ENCODE measurements at regions of chr6 and their contacts with region 1.

Region 1: GRCh38 chr6:166466178-166467122 is 83.7 kb upstream of the MPC1 start:
- DNase-seq: peak in 1 of 2 donors; percentile 75
- H3K4me3 ChIP-seq: peak overlapping the region in 1 of 2 donors; percentile 33
- H3K27ac ChIP-seq: peak overlapping the region; percentile 64 to 75
- H3K4me1 ChIP-seq: peaks cover 0 to 16% of the 10 kb centered on the region in 2 donors
- H3K27me3 ChIP-seq: no peaks in the 10 kb centered on the region
- CTCF ChIP-seq: no peak

Region 2: DNA sequence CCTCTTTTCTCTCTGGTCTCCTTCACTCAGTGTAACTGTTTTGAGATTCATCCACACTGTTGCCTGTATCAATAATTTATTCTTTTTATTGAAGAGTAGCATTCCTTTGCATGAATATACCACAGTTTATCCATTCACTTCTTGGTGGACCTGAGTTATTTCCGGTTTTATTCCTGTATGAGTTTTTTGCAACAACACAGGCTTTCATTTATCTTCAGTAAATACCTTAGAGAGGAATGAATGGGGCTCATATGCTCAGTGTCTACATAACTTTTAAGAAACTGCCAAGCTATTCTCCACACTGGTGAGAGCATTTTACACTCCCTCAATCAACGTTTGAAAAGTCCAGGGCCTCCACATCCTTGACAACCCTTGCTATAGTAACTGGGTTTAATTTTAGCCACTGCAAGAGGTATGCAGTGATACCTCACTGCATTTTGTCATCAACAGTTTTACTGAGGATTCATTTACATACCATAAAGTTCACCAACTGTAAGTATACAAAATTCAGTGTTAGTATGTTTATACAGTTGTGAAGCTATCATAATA is 958.1 kb before region 1 on chr6:
- intact Hi-C with region 1: no loop called
- DNase-seq: no peak
- H3K4me3 ChIP-seq: no peak overlapping the region
- H3K27ac ChIP-seq: no peak overlapping the region
- H3K4me1 ChIP-seq: no peaks in the 10 kb centered on the region
- H3K27me3 ChIP-seq: no peaks in the 10 kb centered on the region
- CTCF ChIP-seq: no peak

Region 3: GRCh38 chr6:166619912-166620311 is 153.5 kb after region 1 on chr6:
- intact Hi-C with region 1: loop called (anchors 2 kb)
- DNase-seq: peak in 1 of 2 donors; percentile 82
- H3K4me3 ChIP-seq: peak overlapping the region in 1 of 2 donors; percentile 1
- H3K27ac ChIP-seq: peak overlapping the region; percentile 63 to 65
- H3K4me1 ChIP-seq: peaks cover 9 to 28% of the 10 kb centered on the region in 2 donors
- H3K27me3 ChIP-seq: no peaks in the 10 kb centered on the region
- CTCF ChIP-seq: no peak